AG04450 (cell line): ENCODE measurements at regions of chr4 and their contacts with region 1.

Region 1: DNA sequence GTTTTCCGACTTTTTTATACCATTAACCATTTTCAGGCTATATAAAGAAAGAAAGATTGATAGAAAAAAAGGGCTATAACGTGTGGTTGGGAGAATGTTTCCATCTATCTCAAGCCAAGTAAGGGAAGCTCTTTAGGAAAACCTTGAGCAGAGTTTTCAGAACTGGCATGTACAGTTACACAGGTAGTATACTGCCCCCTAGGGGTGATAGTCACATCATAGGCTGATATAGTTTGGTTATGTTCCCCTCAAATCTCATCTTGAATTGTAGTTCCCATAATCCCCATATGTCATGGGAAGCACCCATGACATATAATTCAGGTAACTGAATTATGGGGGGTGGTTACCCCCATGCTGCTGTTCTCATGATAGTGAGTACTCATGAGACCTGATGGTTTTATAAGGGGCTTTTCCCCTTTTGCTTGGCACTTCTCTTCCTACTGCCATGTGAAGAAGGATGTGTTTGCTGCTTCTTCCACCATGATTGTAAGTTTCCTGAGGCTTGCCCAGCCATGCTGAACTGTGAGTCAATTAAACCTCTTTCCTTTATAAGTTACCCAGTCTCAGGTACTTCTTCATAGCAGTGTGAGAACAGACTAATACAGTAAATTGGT is 186.8 kb downstream of the TMA16 start:
- DNase-seq: no peak
- H3K4me3 ChIP-seq: no peak overlapping the region
- H3K27ac ChIP-seq: no peak overlapping the region
- H3K27me3 ChIP-seq: no peaks in the 10 kb centered on the region
- CTCF ChIP-seq: peak; percentile 54

Region 2: DNA sequence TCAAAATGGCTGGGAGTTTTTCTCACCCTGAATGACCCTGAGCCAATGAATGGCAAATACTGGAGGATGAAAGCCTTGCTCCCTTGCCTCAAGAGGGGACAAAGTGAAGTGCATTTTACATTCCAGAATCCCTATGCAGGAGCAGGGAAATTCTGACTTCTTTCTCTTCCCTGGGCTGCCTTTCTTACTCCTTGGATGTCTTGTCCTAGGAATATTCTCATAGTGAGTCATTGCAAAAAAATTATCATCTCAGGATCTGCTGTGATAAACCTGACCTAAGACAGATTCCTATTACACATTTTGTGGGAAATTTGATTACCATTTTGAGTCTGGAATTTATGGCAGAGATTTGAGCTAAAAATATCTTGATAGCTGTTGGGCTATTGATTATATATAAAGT is 13.1 kb after region 1 on chr4:
- CTCF ChIA-PET with region 1: interaction called, 16 read pairs
- POLR2A ChIA-PET with region 1: no interaction called
- DNase-seq: peak; percentile 21
- H3K4me3 ChIP-seq: no peak overlapping the region
- H3K27ac ChIP-seq: peak overlapping the region; percentile 82
- H3K27me3 ChIP-seq: no peaks in the 10 kb centered on the region
- CTCF ChIP-seq: 0 out of 2 replicates have a peak, but pooled peaks have one; percentile 13

Region 3: GRCh38 chr4:163701916-163702315 is 20.6 kb after region 1 on chr4:
- CTCF ChIA-PET with region 1: interaction called, 10 read pairs
- POLR2A ChIA-PET with region 1: no interaction called
- DNase-seq: peak; percentile 80
- H3K4me3 ChIP-seq: no peak overlapping the region
- H3K27ac ChIP-seq: no peak overlapping the region
- H3K27me3 ChIP-seq: no peaks in the 10 kb centered on the region
- CTCF ChIP-seq: 0 out of 2 replicates have a peak, but pooled peaks have one; percentile 17